ENCODE measurements at regions of chr4 and their contacts with region 1.

Region 1: DNA sequence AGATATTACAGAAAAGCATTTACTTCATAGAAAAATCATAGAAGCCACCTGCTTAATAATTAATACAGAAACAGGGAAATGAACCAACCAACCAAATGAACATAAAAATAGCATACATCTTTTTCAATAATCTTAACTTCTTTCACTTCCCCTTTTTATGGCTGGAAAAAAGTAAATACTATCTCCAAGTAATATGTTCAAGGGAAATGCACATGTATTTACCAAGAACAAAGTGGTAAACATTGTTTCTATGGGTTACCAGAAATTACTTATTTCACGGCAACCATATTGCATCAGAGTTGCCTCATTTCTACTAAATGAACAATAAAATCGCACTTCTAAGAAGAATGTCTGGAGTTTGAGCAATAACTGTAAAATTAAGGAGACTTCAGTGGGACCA is 321.3 kb downstream of the TMA16 start:
- DNase-seq: no peak
- ATAC-seq: no peak
- H3K4me3 ChIP-seq: no peak overlapping the region
- H3K4me3 Mint-ChIP-seq: no peak overlapping the region
- H3K27ac ChIP-seq: no peak overlapping the region
- H3K27ac Mint-ChIP-seq: no peak overlapping the region
- H3K4me1 ChIP-seq: no peaks in the 10 kb centered on the region
- H3K4me1 Mint-ChIP-seq: no peaks in the 10 kb centered on the region
- H3K27me3 ChIP-seq: no peaks in the 10 kb centered on the region
- H3K27me3 Mint-ChIP-seq: no peaks in the 10 kb centered on the region

Region 2: DNA sequence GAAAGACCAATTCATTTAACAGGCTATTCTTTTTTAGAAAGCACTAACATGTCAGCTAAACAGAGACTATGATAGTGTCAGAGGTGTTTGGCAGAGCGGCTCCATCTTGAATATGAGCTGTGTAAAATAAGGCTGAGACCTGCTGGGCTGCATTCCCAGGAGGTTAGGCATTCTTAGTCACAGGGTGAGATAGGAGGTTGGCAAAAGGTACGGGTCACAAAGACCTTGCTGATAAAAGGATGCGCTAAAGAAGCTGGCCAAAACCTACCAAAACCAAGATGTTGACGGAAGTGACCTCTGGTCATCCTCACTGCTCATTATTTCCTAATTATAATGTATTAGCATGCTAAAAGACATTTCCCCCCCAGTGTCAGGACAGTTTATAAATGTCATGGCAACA is 430.3 kb before region 1 on chr4:
- CTCF ChIA-PET with region 1: no interaction called
- POLR2A ChIA-PET with region 1: interaction called in 1 of 2 experiments, 15 read pairs
- DNase-seq: no peak
- ATAC-seq: no peak
- H3K4me3 ChIP-seq: no peak overlapping the region
- H3K4me3 Mint-ChIP-seq: no peak overlapping the region
- H3K27ac ChIP-seq: no peak overlapping the region
- H3K27ac Mint-ChIP-seq: no peak overlapping the region
- H3K4me1 ChIP-seq: no peaks in the 10 kb centered on the region
- H3K4me1 Mint-ChIP-seq: no peaks in the 10 kb centered on the region
- H3K27me3 ChIP-seq: no peaks in the 10 kb centered on the region
- H3K27me3 Mint-ChIP-seq: peaks cover 0 to 3% of the 10 kb centered on the region in 2 donors